ENCODE measurements at regions of chr4 and their contacts with region 1.

Region 1: DNA sequence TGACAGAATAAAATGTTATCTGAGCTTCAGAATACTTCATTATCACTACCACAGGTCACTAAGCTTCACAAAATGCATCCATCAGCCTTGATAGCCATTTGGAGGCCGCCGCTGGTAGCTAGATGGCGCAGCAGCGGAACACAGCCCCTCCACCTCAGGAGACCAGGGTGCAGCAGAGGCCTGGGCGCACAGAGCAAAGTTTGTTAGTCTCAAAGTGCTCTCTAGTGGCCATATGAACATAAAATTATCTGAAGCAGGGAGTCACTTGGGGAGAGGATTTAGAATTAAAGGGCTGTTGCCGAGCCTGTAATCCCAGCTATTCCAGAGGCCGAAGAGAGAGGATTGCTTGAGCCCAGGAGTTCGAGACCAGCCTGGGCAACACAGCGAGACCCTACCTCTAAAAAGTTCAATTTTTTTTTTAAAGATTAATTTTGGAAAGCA is 8.1 kb upstream of the DCTD start:
- DNase-seq: peak; percentile 72
- H3K4me3 Mint-ChIP-seq: no peak overlapping the region
- H3K27ac Mint-ChIP-seq: no peak overlapping the region
- H3K4me1 Mint-ChIP-seq: peaks cover 13% of the 10 kb centered on the region
- H3K27me3 Mint-ChIP-seq: no peaks in the 10 kb centered on the region
- CTCF ChIP-seq: peak; percentile 24

Region 2: GRCh38 chr4:181143250-181143854 is 1782.0 kb before region 1 on chr4:
- CTCF ChIA-PET with region 1: no interaction called
- intact Hi-C with region 1: loop called (anchors 10 kb)
- DNase-seq: peak; percentile 68
- H3K4me3 Mint-ChIP-seq: no peak overlapping the region
- H3K27ac Mint-ChIP-seq: no peak overlapping the region
- H3K4me1 Mint-ChIP-seq: no peaks in the 10 kb centered on the region
- H3K27me3 Mint-ChIP-seq: no peaks in the 10 kb centered on the region
- CTCF ChIP-seq: peak; percentile 50

Region 3: DNA sequence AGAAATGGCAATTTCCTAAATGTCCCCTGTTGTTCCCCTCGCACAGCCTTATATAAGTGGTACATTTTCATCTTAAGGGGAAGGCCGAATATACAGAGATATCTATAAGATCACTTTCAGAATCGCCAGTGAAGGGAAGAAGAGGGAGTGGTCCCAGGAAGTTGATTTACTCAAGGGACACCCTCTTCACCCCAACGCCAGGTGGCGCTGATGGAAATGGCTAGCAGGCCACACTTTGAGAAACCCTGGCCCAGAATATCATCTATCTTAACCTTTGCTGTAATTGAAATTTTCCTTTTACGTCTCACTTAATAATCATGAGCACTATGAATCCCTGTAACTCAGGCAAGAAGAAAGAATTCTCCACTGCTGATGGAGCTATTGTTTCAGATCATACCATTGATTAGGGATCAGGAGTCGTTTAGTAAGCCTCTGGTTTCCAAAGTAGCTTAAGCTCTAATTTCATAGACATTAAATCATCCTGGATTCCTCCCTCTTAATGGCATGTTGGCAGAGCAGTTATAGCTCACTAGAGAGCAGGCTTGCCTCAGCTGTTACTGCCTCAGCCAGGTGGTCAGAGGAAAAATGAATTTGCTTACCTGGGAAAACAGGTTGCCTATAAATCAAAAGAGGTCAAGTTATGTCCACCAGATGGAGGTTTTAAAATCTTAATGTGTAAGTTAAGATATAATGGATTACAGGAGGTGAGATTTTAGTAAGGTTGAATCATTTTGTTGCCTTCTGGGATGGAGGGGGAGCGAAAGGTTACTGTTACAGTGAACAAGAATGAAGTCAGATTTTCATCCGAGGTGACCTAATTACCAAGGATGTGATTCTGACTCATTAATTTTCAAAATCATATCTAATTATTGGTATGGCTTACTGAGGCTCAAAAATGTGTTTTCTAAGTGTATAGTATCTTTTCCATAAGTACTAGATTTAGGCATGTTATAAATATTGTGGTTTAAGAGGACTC is 1623.3 kb before region 1 on chr4:
- CTCF ChIA-PET with region 1: no interaction called
- intact Hi-C with region 1: loop called (anchors 10 kb)
- DNase-seq: peak; percentile 69
- H3K4me3 Mint-ChIP-seq: peak overlapping the region; percentile 56
- H3K27ac Mint-ChIP-seq: no peak overlapping the region
- H3K4me1 Mint-ChIP-seq: peaks cover 7% of the 10 kb centered on the region
- H3K27me3 Mint-ChIP-seq: no peaks in the 10 kb centered on the region
- CTCF ChIP-seq: peak; percentile 43

Region 4: GRCh38 chr4:182478475-182478874 is 446.8 kb before region 1 on chr4:
- CTCF ChIA-PET with region 1: no interaction called
- intact Hi-C with region 1: loop called (anchors 10 kb)
- DNase-seq: no peak
- H3K4me3 Mint-ChIP-seq: no peak overlapping the region
- H3K27ac Mint-ChIP-seq: no peak overlapping the region
- H3K4me1 Mint-ChIP-seq: no peaks in the 10 kb centered on the region
- H3K27me3 Mint-ChIP-seq: no peaks in the 10 kb centered on the region
- CTCF ChIP-seq: peak; percentile 35

Region 5: DNA sequence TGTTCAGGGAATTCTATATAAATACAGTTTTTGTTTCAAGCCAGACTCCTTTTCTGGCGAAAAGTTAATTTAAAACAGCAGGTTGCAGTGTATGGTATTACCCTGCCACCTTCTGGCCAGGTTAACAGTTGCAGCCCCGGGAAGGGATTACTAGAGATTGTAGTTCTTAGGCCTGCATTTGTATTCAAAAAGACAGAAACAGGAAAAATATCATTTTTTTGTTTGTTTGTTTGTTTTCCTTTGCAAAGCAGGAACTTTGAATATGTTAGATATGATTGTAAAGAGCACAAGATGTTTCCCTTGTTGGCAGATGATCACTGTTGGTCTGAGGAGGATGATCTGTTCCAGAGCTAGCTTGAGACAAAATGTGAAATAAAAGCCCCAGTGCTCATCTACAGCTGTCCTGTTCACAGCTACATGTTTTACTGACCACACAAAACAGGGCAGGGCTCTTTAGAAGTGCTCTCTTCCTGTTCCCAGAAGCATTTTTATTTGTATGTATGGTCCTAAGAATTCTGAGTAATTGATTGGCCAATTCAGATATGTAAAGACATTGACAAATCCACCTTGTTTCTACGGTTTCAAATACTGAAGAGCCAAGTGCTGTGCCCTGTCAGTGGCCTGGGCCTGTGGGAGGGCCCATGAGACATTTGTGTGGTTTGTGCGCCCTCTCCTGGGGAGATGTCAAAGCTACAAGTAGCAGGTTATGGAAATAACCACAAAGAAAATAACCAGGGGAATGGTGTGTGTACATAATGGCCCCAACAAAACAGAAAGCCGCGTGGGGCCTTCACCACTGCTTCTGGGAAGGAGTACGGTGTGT is 336.8 kb after region 1 on chr4:
- CTCF ChIA-PET with region 1: interaction called, 4 read pairs
- intact Hi-C with region 1: loop called (anchors 5 kb)
- DNase-seq: peak; percentile 79
- H3K4me3 Mint-ChIP-seq: no peak overlapping the region
- H3K27ac Mint-ChIP-seq: peak overlapping the region; percentile 23
- H3K4me1 Mint-ChIP-seq: peaks cover 23% of the 10 kb centered on the region
- H3K27me3 Mint-ChIP-seq: no peaks in the 10 kb centered on the region
- CTCF ChIP-seq: peak; percentile 60